ENCODE measurements at regions of chr17 and their contacts with region 1.

Region 1: DNA sequence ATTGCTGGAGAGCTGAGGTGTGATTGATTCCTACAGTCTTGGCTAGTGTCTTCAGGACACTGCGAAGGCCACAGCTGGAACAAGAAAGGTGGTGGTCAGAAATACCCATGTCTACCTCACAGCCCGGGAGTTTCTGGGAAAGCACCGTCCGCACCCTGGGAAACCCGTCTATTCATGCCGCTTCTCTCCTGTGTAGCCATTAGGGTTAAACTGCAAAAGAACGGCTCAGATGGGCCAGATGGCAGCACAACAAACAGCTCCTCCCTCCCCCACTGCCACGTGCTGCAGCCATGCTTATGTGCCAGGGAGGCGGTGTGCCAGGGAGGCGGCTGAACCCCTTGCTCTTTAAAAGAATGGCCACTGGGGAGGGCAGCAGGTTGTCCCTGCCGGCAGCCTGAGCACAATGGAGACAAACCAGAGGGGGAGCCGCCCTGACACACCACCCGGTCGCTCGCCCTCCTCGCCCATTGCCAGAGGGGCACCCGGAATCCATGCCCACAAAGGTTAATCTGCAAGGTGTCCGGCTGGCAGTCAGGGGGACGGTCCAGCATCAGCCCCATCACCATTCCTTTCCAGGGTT is 65.2 kb downstream of the CYTH1 start:
- DNase-seq: peak; percentile 71 to 88 (median 76)
- ATAC-seq: peak; percentile 79 to 90 (median 90)
- H3K4me3 ChIP-seq: peak overlapping the region; percentile 11 to 66 (median 56)
- H3K27ac ChIP-seq: peak overlapping the region in 11 of 12 donors; percentile 19 to 76 (median 63)
- H3K4me1 ChIP-seq: peaks cover 6 to 82% (median 38%) of the 10 kb centered on the region in 12 donors
- H3K27me3 ChIP-seq: no peaks in the 10 kb centered on the region
- CTCF ChIP-seq: peak in 2 of 12 donors; percentile 18 to 24
- POLR2A ChIP-seq: no peak

Region 2: DNA sequence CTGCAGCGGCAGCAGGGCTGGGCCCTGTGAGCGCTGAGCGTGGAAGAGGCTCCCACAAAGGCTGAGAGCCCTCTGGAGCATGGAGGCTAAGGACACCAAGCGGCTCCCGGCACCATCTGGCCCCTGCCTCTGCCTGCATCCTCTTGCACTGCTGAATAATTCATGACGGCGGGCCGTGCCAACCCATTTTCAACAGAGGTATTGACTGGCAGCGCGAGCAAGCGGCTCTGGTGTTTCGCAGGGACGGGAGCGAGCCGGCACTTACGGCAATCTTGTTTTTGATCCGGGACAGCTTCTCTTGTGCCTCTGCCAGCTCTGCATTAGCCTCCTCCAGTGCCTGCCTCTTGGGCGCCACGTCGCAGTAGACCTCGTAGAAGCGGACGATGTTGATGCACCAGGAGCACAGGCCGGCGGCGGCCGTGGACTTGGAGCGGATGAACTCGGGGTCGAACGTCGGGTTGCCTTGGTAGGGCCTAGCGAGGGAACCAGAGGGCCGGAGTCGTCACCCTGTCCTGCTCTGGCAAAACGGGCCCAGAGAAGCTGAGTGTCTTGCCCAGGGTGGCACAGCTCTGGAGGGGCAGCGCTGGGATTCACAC is 258.1 kb before region 1 on chr17:
- intact Hi-C with region 1: no loop called
- DNase-seq: no peak
- ATAC-seq: no peak
- H3K4me3 ChIP-seq: no peak overlapping the region
- H3K27ac ChIP-seq: no peak overlapping the region
- H3K4me1 ChIP-seq: no peaks in the 10 kb centered on the region
- H3K27me3 ChIP-seq: no peaks in the 10 kb centered on the region
- CTCF ChIP-seq: no peak
- POLR2A ChIP-seq: no peak

Region 3: DNA sequence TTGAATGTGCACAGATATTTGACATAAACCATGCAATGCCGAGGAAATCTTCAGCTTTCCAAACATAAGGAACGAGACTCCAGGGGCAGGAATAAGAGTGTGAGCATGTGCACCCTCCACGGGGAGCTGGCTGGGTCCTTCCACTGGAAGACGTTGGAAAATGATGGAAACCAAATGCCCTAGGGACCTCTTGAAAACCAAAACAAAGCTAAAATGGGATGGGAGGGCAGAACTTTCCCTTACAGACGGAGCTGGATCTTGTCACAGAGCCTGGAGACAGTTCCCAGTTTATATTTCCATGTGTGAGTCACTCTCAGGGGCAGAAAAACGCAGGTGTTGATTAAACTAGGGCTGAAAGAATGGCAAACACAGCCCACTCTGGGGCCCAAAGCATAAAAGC is 105.3 kb before region 1 on chr17:
- intact Hi-C with region 1: no loop called
- DNase-seq: peak in 2 of 5 donors; percentile 15 to 32
- ATAC-seq: peak in 3 of 4 donors; percentile 47 to 68 (median 63)
- H3K4me3 ChIP-seq: no peak overlapping the region
- H3K27ac ChIP-seq: peak overlapping the region in 1 of 12 donors; percentile 32
- H3K4me1 ChIP-seq: peaks cover 0 to 14% (median 0%) of the 10 kb centered on the region in 12 donors
- H3K27me3 ChIP-seq: no peaks in the 10 kb centered on the region
- CTCF ChIP-seq: no peak
- POLR2A ChIP-seq: no peak

Region 4: DNA sequence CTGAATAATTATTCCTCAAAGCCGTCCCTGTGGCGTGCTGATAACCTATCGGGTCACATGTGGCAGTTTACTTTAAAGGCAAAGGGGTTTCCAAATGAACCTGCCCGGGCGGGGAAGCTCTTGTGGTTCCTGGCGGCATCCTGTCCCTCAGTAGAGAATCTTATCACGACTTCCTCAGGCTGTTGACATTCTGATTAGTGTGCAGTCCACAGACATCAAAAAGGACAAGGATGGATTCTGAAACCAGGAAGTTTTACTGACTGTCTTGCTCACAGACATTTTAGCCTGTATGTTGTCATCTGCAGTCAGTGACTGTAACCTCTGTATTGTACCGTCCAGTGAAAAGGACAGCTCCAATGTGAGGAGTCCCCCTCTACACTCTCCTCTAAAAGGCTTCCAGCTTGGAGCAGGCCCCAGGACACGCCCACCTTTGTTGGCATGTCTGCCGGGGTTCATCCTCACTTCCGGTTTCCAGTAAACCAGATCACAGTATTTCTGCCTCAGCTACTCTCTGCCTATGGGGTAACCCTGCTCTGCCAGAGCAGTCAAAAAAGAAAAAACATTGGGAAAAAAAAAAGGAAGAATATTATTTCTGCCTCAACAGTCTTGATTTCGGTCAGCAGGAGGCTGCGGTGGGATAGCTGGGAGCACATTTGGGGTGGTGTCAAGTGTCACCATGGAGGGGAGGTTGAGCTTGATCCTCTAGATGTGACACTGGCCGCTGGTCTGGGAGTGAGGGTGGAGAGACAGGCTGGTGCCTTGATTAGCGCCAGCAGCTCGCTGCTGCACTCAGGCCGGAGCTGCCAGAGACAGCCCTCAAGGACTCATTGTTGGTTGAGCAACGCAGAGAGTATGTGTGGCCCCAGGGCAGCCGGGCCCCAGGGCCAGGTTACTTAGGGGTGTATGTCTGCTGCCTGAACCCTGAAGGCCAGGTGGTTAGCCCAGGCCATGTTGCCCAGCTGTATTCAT is 50.7 kb before region 1 on chr17:
- intact Hi-C with region 1: no loop called
- DNase-seq: peak in 4 of 5 donors; percentile 51 to 63 (median 56)
- ATAC-seq: peak; percentile 54 to 76 (median 68)
- H3K4me3 ChIP-seq: no peak overlapping the region
- H3K27ac ChIP-seq: peak overlapping the region; percentile 3 to 94 (median 70)
- H3K4me1 ChIP-seq: peaks cover 0 to 27% (median 18%) of the 10 kb centered on the region in 12 donors
- H3K27me3 ChIP-seq: no peaks in the 10 kb centered on the region
- CTCF ChIP-seq: no peak
- POLR2A ChIP-seq: no peak

Region 5: GRCh38 chr17:78736526-78737079 is 19.7 kb after region 1 on chr17:
- intact Hi-C with region 1: loop called in 1 of 10 experiments (anchors 2 kb)
- DNase-seq: peak; percentile 81 to 88 (median 84)
- ATAC-seq: peak; percentile 83 to 89 (median 88)
- H3K4me3 ChIP-seq: peak overlapping the region; percentile 25 to 68 (median 56)
- H3K27ac ChIP-seq: peak overlapping the region; percentile 66 to 94 (median 86)
- H3K4me1 ChIP-seq: peaks cover 0 to 100% (median 74%) of the 10 kb centered on the region in 12 donors
- H3K27me3 ChIP-seq: no peaks in the 10 kb centered on the region
- CTCF ChIP-seq: peak in 4 of 12 donors; percentile 4 to 24 (median 22)
- POLR2A ChIP-seq: peak in 1 of 2 donors; percentile 42

Region 6: DNA sequence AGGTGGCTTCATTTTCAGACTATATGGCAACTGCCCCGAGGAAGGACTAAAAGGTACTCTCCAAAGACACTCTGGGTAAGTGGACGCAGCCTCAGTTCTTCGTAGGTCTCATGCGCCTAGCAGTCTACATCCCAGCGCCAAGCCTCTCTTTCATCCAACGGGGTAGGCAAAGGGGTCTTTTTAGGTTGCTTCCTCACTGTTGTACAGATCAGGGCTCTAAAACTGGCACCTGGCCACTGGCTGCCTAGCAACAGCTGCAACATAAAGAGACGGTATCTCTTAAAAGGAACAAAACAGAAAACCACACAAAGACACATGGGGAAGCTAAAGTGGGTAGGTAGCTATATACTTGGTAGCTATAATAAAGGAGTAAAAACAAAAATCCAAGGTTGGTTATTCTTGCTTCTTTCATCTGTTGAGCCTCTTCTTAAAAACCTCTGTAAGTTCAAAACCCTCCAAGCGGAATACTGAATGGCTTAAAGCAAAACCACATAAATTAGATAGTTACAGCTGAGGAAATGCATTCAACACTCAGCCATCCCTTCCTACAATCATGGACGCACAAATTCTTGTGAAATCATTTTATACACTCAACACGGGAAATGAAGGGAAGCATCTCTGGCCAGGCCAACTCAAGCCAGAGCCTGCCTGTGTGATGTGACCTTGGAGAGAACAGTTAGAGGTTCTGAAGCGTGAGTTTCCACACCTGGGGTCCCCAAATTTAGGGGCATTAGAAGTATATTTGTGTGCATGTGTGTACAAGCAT is 42.5 kb after region 1 on chr17:
- intact Hi-C with region 1: no loop called
- DNase-seq: peak; percentile 48 to 76 (median 70)
- ATAC-seq: peak; percentile 64 to 84 (median 74)
- H3K4me3 ChIP-seq: peak overlapping the region in 1 of 12 donors; percentile 23
- H3K27ac ChIP-seq: peak overlapping the region in 8 of 12 donors; percentile 2 to 82 (median 27)
- H3K4me1 ChIP-seq: peaks cover 0 to 87% (median 37%) of the 10 kb centered on the region in 12 donors
- H3K27me3 ChIP-seq: no peaks in the 10 kb centered on the region
- CTCF ChIP-seq: no peak
- POLR2A ChIP-seq: no peak

Region 7: DNA sequence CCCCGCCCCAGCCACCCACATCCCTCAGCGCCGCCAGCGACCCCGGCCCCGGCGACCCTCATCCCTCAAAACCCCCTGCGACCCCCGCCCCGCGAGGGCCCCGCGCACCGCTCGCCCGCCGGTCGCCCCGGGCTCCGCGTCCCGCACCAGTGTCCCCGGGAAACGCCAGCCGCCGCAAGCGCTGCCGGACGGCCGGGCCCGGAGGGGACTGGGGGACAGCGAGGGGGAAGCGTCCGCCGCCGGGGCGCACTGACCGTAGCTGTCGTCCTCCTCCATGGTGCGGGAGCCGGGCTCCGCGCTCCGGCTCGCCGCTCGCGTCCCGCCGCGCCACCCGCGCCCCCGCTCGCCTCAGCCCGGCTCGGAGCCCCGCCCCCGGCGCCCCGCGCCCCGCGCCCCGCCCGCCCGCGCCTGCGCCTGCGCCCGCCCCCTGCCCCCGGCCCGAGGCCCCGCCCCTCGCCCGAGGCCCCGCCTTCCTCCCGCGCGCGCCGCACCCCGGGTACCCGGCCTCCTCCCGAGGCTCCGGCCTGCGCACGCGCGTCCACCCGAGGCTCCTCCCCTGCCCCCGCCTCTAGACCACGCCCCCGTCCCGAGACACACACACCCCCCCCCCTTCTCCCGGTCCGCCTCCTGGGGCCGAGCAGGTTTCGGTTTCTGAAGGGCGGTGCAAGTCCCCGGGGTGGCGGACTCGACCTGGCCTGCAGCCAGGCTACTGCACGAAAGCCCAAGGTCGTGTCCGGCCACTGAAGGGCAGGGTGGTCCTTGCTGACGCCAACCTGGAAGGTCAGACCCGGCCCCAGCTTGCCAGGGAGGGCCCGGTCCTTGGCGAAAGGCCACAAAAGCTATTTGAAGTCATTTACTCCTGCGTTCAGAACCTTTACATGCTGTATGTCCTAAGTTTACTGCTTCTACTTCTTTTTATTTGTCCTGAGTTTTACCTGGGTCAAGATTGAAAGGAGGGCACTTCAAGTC is 65.3 kb after region 1 on chr17 and contains the start of gene CYTH1:
- intact Hi-C with region 1: loop called in 2 of 10 experiments (anchors 5 to 10 kb)
- DNase-seq: peak; percentile 97 to 99 (median 97)
- ATAC-seq: peak; percentile 94 to 96 (median 95)
- H3K4me3 ChIP-seq: peak within 1 kb of the TSS; percentile 85 to 100 (median 94)
- H3K27ac ChIP-seq: peak within 1 kb of the TSS; percentile 88 to 99 (median 96)
- H3K4me1 ChIP-seq: peaks cover 0 to 58% (median 20%) of the 10 kb centered on the region in 12 donors
- H3K27me3 ChIP-seq: no peaks in the 10 kb centered on the region
- CTCF ChIP-seq: no peak
- POLR2A ChIP-seq: peak; percentile 30 to 54
- total RNA-seq, gene CYTH1: 27.2 to 59.1 (median 31.2) TPM

Region 8: DNA sequence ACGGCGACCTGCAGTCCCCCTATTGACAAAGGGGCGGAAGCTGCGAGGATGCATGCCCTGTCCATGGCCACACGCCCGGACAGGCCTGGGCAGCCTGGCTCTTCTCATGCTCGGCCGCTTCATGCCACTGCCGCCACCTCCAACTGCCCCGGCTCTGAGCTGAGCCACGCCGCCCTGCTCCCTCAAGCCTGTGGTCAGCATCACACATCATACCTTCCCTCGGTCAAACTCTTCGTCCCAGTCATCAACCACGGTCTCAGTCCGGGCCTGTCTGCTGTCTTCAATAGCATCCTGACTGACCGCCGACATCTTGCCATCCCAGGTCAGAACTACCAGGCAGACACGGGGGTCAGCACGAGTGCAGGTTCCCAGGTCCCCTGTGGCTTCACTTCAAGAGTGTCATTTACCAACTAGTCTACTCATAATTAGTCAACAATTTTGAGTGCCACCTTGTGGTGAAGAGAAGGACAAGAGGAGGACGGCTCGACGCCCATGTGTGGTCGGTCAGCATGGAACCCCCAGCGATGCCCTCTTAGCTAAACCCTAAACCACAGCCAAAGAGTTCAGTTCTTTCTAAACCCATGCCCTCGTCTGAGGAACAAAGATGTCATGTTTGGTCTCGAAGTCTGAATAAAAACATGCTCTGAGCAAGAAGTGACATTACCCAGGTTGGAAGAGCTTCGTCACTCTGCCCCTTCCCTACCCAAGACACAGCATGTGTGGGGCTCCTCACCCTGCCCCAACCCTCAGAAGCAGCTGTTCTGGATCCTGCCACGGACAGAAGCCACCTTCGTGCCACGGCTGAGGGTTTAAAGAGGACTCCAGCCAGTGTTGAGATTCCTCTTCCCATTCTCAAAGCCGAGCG is 82.0 kb after region 1 on chr17:
- intact Hi-C with region 1: loop called in 5 of 10 experiments (anchors 5 to 10 kb)
- DNase-seq: no peak
- ATAC-seq: peak in 2 of 4 donors; percentile 20 to 31
- H3K4me3 ChIP-seq: no peak overlapping the region
- H3K27ac ChIP-seq: no peak overlapping the region
- H3K4me1 ChIP-seq: peaks cover 0 to 37% (median 11%) of the 10 kb centered on the region in 12 donors
- H3K27me3 ChIP-seq: no peaks in the 10 kb centered on the region
- CTCF ChIP-seq: peak; percentile 22 to 63 (median 47)
- POLR2A ChIP-seq: no peak

Measured in heart left ventricle (tissue), 16 donors.